ENCODE measurements at regions of chr20 and their contacts with region 1.

Region 1: GRCh38 chr20:62386383-62387218 is at the start of gene RPS21:
- DNase-seq: peak; percentile 97
- CTCF ChIP-seq: no peak

Region 2: GRCh38 chr20:62165762-62166399 is 220.7 kb before region 1 on chr20:
- in situ Hi-C with region 1: no loop called
- DNase-seq: no peak
- CTCF ChIP-seq: no peak

Region 3: DNA sequence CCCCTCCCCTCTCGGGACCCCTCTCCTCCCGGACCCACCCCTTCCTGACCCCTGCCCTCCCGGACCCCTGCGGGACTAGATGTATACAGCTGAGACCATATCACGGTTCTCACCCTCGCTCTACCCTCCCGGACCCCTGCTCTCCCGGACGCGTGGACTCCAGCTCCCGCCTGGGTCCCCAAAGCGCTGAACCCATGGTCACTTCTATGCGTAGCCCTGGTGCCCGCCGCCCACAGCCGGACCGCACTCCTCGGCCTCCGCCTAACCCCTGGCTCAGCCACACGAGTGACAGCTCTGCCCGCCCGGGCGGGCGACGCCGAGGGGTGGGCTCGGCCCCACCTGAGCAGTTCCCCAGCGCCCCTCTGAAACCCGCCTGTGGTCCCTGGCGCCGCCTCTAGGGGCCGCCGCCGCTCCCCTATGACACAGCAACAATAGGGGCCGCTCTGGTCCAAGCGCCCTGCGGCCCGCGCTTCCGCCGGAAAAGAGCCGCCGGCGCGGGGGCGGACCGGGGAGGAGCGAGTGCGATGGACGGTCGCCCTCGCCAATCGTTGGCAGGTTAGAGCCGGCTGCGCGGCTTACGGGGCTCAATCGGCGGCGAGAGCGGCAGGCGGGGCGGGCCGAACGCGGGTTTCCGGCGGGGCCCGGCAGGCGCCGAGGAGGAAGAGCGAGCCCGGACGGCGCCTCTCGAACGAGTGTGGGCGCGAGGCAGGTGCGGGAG is 84.1 kb before region 1 on chr20 and contains the start of gene ADRM1:
- in situ Hi-C with region 1: loop called (anchors 10 kb)
- DNase-seq: peak; percentile 100
- CTCF ChIP-seq: peak; percentile 85

Region 4: GRCh38 chr20:62449951-62450691 is 63.5 kb after region 1 on chr20:
- in situ Hi-C with region 1: no loop called
- DNase-seq: no peak
- CTCF ChIP-seq: no peak

Region 5: GRCh38 chr20:62476056-62476838 is 89.6 kb after region 1 on chr20:
- in situ Hi-C with region 1: no loop called
- DNase-seq: no peak
- CTCF ChIP-seq: no peak

Region 6: GRCh38 chr20:62603021-62603906 is 216.7 kb after region 1 on chr20:
- in situ Hi-C with region 1: no loop called
- DNase-seq: peak; percentile 76
- CTCF ChIP-seq: no peak

Measured in GM13976 (cell line).